ENCODE measurements at regions of chr6 and their contacts with region 1.

Region 1: DNA sequence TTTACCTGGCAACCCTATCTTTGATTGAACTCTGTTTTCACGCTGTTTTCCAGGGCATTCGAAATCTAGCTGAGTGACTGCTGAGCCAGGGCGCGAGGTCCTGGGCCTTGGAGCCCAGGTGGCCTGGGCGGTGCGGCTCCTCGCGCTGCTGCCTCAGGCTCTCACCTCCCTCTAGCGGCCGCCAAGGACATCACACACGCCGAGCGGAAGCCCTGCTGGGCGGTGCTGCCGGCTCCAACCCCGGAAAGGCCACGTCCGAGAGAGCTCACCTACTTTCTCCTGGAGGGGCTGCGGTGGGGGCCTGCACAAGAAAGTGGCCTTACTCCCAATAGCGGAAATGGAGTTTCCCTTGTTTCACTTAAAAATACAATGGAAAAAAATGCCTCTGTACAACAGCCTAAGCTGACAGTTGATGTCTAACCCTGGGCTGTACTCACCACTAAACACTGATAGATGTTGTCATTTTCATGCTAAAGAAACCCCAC is 77.7 kb downstream of the ELOVL4 start:
- DNase-seq: peak; percentile 59 to 92
- H3K4me3 ChIP-seq: peak overlapping the region in 1 of 4 experiments; percentile 26; a peak in 1 of 8 replicates
- H3K27ac ChIP-seq: no peak overlapping the region
- H3K4me1 ChIP-seq: peaks cover 2 to 4% (median 4%) of the 10 kb centered on the region in 4 experiments; a peak in 4 of 7 replicates
- H3K27me3 ChIP-seq: peaks cover 0 to 3% (median 0%) of the 10 kb centered on the region in 4 experiments; a peak in 1 of 7 replicates
- CTCF ChIP-seq: peak; percentile 86 to 94 (median 92)
- EP300 ChIP-seq: no peak
- POLR2A ChIP-seq: no peak
- RAD21 ChIP-seq: peak; percentile 70 to 82

Region 2: GRCh38 chr6:79687759-79688158 is 181.9 kb before region 1 on chr6:
- CTCF ChIA-PET with region 1: no interaction called
- POLR2A ChIA-PET with region 1: no interaction called
- DNase-seq: no peak
- H3K4me3 ChIP-seq: no peak overlapping the region
- H3K27ac ChIP-seq: no peak overlapping the region
- H3K4me1 ChIP-seq: peaks cover 0 to 4% (median 0%) of the 10 kb centered on the region in 4 experiments; a peak in 1 of 7 replicates
- H3K27me3 ChIP-seq: no peaks in the 10 kb centered on the region
- CTCF ChIP-seq: no peak
- EP300 ChIP-seq: no peak
- POLR2A ChIP-seq: no peak
- RAD21 ChIP-seq: no peak

Region 3: DNA sequence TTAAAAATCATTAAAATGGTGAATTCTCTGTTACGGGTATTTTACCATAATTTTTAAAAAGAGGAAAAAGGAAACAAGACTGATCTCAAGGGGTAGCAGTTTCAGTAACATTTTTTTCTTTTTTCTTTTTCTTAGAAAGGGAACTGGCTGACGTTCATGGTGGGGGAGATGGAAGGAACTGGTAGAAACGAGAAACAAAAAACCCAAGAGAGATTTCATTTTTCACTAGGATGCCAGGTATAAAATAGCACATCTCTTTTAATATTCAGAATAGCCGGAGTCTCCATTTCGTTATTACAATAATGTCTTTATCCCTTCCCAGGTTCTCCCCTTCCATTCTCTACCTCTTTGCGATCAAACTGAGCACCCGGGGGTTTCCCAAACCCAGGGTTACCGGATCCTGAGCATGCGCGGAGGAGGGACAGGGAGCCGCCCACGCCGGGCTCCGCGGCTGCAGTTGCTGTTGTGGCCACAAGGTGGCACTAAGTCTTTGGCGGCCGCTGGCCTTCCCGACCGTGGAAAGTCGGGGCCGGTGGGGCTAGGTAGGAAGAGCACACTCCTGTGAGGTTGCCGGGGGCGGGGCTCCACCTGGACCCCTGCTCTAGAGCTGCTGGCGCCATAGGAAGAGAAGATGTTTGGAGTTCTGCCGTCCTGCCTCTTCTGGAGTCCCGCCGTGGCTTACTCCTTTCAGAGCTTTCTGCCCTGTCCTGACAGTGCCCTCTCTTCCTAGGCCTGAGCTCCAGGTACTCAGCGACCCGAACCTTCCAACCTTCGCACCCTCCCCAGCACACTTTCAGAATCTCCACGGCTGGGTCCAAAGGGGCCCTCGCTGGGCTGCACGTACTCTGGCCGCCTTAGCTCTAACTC is 91.7 kb before region 1 on chr6:
- CTCF ChIA-PET with region 1: interaction called, 17 read pairs
- POLR2A ChIA-PET with region 1: no interaction called
- DNase-seq: peak; percentile 70 to 98
- H3K4me3 ChIP-seq: peak overlapping the region in 1 of 4 experiments; percentile 48; a peak in 4 of 8 replicates
- H3K27ac ChIP-seq: no peak overlapping the region
- H3K4me1 ChIP-seq: peaks cover 0 to 3% (median 1%) of the 10 kb centered on the region in 4 experiments; a peak in 1 of 7 replicates
- H3K27me3 ChIP-seq: no peaks in the 10 kb centered on the region
- CTCF ChIP-seq: peak; percentile 94 to 96 (median 94)
- EP300 ChIP-seq: no peak
- POLR2A ChIP-seq: no peak
- RAD21 ChIP-seq: peak; percentile 82 to 87

Region 4: GRCh38 chr6:79788756-79789155 is 80.9 kb before region 1 on chr6:
- CTCF ChIA-PET with region 1: interaction called, 10 read pairs
- POLR2A ChIA-PET with region 1: no interaction called
- DNase-seq: no peak
- H3K4me3 ChIP-seq: no peak overlapping the region
- H3K27ac ChIP-seq: no peak overlapping the region
- H3K4me1 ChIP-seq: no peaks in the 10 kb centered on the region
- H3K27me3 ChIP-seq: no peaks in the 10 kb centered on the region
- CTCF ChIP-seq: no peak
- EP300 ChIP-seq: no peak
- POLR2A ChIP-seq: no peak
- RAD21 ChIP-seq: no peak

Region 5: GRCh38 chr6:79813854-79814709 is 55.6 kb before region 1 on chr6:
- CTCF ChIA-PET with region 1: interaction called, 34 read pairs
- POLR2A ChIA-PET with region 1: no interaction called
- DNase-seq: peak; percentile 7 to 80
- H3K4me3 ChIP-seq: no peak overlapping the region
- H3K27ac ChIP-seq: no peak overlapping the region
- H3K4me1 ChIP-seq: peaks cover 0 to 7% (median 4%) of the 10 kb centered on the region in 4 experiments; a peak in 3 of 7 replicates
- H3K27me3 ChIP-seq: no peaks in the 10 kb centered on the region
- CTCF ChIP-seq: peak; percentile 27 to 83 (median 81)
- EP300 ChIP-seq: no peak
- POLR2A ChIP-seq: no peak
- RAD21 ChIP-seq: peak; percentile 78 to 85

Region 6: DNA sequence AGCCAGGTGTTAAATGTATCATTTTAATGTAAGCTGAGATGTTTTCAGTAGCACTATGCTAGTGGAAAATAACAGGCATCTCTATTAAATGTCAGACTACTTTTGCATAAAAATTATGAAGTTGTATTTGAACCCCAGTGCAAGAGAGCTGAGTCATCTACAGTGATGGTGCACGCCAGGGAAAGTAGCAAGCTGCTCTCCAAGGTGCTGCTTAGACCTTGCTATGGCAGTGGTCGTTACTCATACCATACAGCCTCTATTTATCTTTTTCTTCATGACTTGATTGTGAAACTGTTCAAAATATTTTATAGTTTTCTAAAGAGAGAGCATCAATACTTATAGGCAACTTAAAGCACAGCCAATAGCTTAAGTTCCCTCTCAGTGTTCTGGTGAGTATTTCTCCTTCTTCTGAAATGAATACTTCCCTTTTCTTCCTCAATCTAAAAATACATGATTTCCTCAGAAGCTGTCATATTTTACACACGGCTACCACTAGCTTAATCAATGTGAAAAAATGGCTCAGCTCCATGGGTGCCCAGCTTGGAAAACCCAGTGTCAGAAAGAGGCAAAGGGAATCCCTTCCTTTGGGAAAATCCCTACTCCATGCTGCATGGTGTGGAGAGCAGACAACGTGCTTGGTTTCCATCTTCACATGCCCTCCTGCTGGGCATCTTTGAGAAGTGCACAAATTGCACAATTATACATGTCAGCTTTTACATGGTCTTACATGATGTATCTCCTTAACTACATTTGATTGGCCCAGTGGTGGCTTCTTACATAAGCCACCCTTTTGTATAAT is 27.9 kb before region 1 on chr6:
- CTCF ChIA-PET with region 1: interaction called, 18 read pairs
- POLR2A ChIA-PET with region 1: interaction called, 4 read pairs
- DNase-seq: no peak
- H3K4me3 ChIP-seq: no peak overlapping the region
- H3K27ac ChIP-seq: no peak overlapping the region
- H3K4me1 ChIP-seq: no peaks in the 10 kb centered on the region
- H3K27me3 ChIP-seq: no peaks in the 10 kb centered on the region; a peak in 1 of 7 replicates
- CTCF ChIP-seq: no peak
- EP300 ChIP-seq: no peak
- POLR2A ChIP-seq: no peak
- RAD21 ChIP-seq: no peak

Region 7: GRCh38 chr6:79954849-79955248 is 85.2 kb after region 1 on chr6:
- CTCF ChIA-PET with region 1: no interaction called
- POLR2A ChIA-PET with region 1: no interaction called
- DNase-seq: no peak
- H3K4me3 ChIP-seq: no peak overlapping the region
- H3K27ac ChIP-seq: no peak overlapping the region
- H3K4me1 ChIP-seq: no peaks in the 10 kb centered on the region
- H3K27me3 ChIP-seq: no peaks in the 10 kb centered on the region; a peak in 1 of 7 replicates
- CTCF ChIP-seq: no peak
- EP300 ChIP-seq: no peak
- POLR2A ChIP-seq: no peak
- RAD21 ChIP-seq: no peak

Measured in H1 (cell line).